Naive thymus-derived CD4-positive, alpha-beta T cell (primary cell): ENCODE measurements at regions of chr3 and their contacts with region 1.

Region 1: GRCh38 chr3:51995346-51996163 is at the start of gene RPL29:
- DNase-seq: peak; percentile 80 to 95 (median 92)
- ATAC-seq: peak; percentile 99
- H3K4me3 ChIP-seq: peak within 1 kb of the TSS; percentile 98
- H3K4me3 Mint-ChIP-seq: peak within 1 kb of the TSS; percentile 92 to 100 (median 98)
- H3K27ac ChIP-seq: peak within 1 kb of the TSS; percentile 95
- H3K27ac Mint-ChIP-seq: peak within 1 kb of the TSS; percentile 98 to 100 (median 100)
- H3K4me1 ChIP-seq: peaks cover 13 to 15% of the 10 kb centered on the region in 2 donors
- H3K4me1 Mint-ChIP-seq: peaks cover 19 to 44% (median 31%) of the 10 kb centered on the region in 7 donors
- H3K27me3 ChIP-seq: no peaks in the 10 kb centered on the region
- H3K27me3 Mint-ChIP-seq: peaks cover 0 to 16% (median 0%) of the 10 kb centered on the region in 5 donors
- total RNA-seq, gene RPL29: 1,152 to 1,744 (median 1,537) TPM

Region 2: DNA sequence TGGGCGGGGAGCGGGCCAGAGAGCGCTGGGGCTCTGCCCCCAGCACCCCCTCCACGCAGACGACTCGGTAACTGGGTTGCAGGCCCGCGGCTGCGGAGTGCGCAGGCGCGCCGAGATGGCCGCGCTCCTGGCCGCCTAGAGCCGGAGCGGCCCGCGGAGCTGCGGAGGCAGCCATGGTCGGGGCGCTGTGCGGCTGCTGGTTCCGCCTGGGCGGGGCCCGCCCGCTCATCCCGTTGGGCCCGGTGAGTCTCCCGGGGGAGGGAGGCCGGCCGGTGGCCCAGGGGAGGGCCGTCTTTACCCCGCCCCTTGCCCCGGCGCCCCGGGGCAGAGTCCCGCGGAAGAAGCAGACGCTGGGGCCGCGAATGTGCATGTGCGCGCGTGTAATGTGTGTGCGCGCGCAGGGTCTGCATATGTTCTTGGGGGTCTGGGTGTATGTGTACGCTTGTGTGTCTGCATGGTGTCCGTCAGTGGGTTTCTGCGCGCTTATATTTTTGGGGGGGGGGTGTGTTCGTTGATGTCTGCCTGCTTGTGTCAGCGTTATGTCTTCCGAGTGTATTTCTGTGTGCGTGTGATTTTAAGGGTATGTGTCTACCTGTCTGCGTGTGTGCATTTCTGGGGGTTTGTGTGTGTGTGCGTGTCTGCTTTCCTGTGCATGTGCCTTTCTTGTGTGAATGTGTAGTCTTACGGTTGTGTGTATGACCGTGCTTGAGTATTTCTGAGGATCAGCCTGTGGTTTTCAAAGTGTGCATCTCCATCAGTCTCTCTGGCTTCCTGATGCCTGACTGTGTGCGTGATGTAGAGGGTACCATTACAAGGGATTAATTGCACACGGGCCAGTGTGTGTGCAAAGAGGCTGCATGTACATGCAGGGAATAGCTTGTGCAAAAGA is 20.3 kb before region 1 on chr3 and contains the start of gene ABHD14A:
- CTCF ChIA-PET with region 1: interaction called, 5 read pairs
- POLR2A ChIA-PET with region 1: interaction called, 14 read pairs
- intact Hi-C with region 1: loop called (anchors 1 to 2 kb)
- DNase-seq: peak; percentile 68 to 85 (median 73)
- ATAC-seq: peak; percentile 80
- H3K4me3 ChIP-seq: peak within 1 kb of the TSS; percentile 82
- H3K4me3 Mint-ChIP-seq: peak within 1 kb of the TSS; percentile 83 to 100 (median 94)
- H3K27ac ChIP-seq: peak within 1 kb of the TSS; percentile 77
- H3K27ac Mint-ChIP-seq: peak within 1 kb of the TSS; percentile 88 to 97 (median 92)
- H3K4me1 ChIP-seq: peaks cover 9 to 21% of the 10 kb centered on the region in 2 donors
- H3K4me1 Mint-ChIP-seq: peaks cover 26 to 53% (median 32%) of the 10 kb centered on the region in 7 donors
- H3K27me3 ChIP-seq: no peaks in the 10 kb centered on the region
- H3K27me3 Mint-ChIP-seq: no peaks in the 10 kb centered on the region
- total RNA-seq, gene ABHD14A: 9.9 to 23.7 (median 14.7) TPM

Region 3: GRCh38 chr3:52144034-52144795 is 148.7 kb after region 1 on chr3:
- CTCF ChIA-PET with region 1: interaction called, 33 read pairs
- POLR2A ChIA-PET with region 1: interaction called, 3 read pairs
- intact Hi-C with region 1: loop called in 1 of 2 experiments (anchors 1 kb)
- DNase-seq: peak; percentile 70 to 88 (median 82)
- ATAC-seq: peak; percentile 98
- H3K4me3 ChIP-seq: no peak overlapping the region
- H3K4me3 Mint-ChIP-seq: peak overlapping the region in 1 of 10 donors; percentile 6
- H3K27ac ChIP-seq: no peak overlapping the region
- H3K27ac Mint-ChIP-seq: peak overlapping the region in 5 of 9 donors; percentile 38 to 80 (median 64)
- H3K4me1 ChIP-seq: peaks cover 5 to 6% of the 10 kb centered on the region in 2 donors
- H3K4me1 Mint-ChIP-seq: peaks cover 5 to 10% (median 7%) of the 10 kb centered on the region in 7 donors
- H3K27me3 ChIP-seq: no peaks in the 10 kb centered on the region
- H3K27me3 Mint-ChIP-seq: no peaks in the 10 kb centered on the region

Region 4: GRCh38 chr3:52197842-52198668 is 202.5 kb after region 1 on chr3 and contains the start of gene ALAS1:
- CTCF ChIA-PET with region 1: no interaction called
- POLR2A ChIA-PET with region 1: interaction called, 3 read pairs
- intact Hi-C with region 1: loop called (anchors 5 kb)
- DNase-seq: peak; percentile 86 to 99 (median 94)
- ATAC-seq: peak; percentile 97
- H3K4me3 ChIP-seq: peak within 1 kb of the TSS; percentile 80
- H3K4me3 Mint-ChIP-seq: peak within 1 kb of the TSS; percentile 85 to 98 (median 96)
- H3K27ac ChIP-seq: peak within 1 kb of the TSS; percentile 94
- H3K27ac Mint-ChIP-seq: peak within 1 kb of the TSS; percentile 88 to 98 (median 94)
- H3K4me1 ChIP-seq: peaks cover 25 to 30% of the 10 kb centered on the region in 2 donors
- H3K4me1 Mint-ChIP-seq: peaks cover 33 to 56% (median 49%) of the 10 kb centered on the region in 7 donors
- H3K27me3 ChIP-seq: no peaks in the 10 kb centered on the region
- H3K27me3 Mint-ChIP-seq: no peaks in the 10 kb centered on the region
- total RNA-seq, gene ALAS1: 12.6 to 74.3 (median 27.4) TPM

Region 5: GRCh38 chr3:52536369-52537164 is 541.0 kb after region 1 on chr3 and contains the start of gene UQCC5:
- CTCF ChIA-PET with region 1: no interaction called
- POLR2A ChIA-PET with region 1: no interaction called
- intact Hi-C with region 1: loop called in 1 of 2 experiments (anchors 10 kb)
- DNase-seq: peak; percentile 89 to 98 (median 97)
- ATAC-seq: peak; percentile 95
- H3K4me3 ChIP-seq: peak within 1 kb of the TSS; percentile 67
- H3K4me3 Mint-ChIP-seq: peak within 1 kb of the TSS; percentile 96 to 100 (median 99)
- H3K27ac ChIP-seq: peak within 1 kb of the TSS; percentile 85
- H3K27ac Mint-ChIP-seq: peak within 1 kb of the TSS; percentile 96 to 99 (median 98)
- H3K4me1 ChIP-seq: peaks cover 24 to 30% of the 10 kb centered on the region in 2 donors
- H3K4me1 Mint-ChIP-seq: peaks cover 29 to 66% (median 50%) of the 10 kb centered on the region in 7 donors
- H3K27me3 ChIP-seq: no peaks in the 10 kb centered on the region
- H3K27me3 Mint-ChIP-seq: no peaks in the 10 kb centered on the region
- total RNA-seq, gene UQCC5: 5.4 to 11.9 (median 10.7) TPM